GM12878 (cell line): ENCODE measurements at regions of chr12 and their contacts with region 1.

Region 1: DNA sequence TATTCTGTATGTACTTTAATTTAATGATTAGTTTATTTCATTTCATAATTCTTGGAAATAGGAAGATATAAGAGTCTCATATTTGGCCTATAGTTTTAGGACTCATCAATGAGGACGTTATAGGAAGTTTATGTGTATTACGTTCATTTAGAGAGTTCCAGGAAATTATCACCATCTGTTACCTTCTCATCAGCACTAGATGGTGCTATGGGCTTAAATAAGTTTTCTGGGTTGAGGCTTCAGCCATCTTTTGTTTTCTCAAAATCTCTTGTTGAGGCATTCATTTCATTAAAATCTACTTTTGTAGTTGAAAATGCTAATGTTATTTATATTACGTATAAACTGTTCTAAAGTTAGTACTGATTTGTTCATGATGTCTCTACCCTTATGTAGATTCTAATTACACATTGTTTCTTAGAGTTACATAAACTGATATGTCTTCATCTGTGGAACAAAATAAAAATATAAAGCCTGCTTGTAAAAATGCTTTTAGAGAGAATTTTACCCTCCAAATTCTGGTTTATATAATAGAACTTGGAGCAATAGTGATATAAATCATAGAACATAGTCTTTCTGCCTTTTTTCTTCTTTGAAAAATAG is 89.2 kb downstream of the CFAP54 start:
- DNase-seq: peak; percentile 57
- ATAC-seq: peak; percentile 99
- H3K4me3 ChIP-seq: no peak overlapping the region
- H3K27ac ChIP-seq: no peak overlapping the region
- H3K4me1 ChIP-seq: no peaks in the 10 kb centered on the region
- H3K27me3 ChIP-seq: no peaks in the 10 kb centered on the region
- CTCF ChIP-seq: peak; percentile 52 to 79 (median 57); a peak in 5 of 6 replicates
- EP300 ChIP-seq: no peak
- POLR2A ChIP-seq: no peak
- RAD21 ChIP-seq: peak; percentile 93

Region 2: DNA sequence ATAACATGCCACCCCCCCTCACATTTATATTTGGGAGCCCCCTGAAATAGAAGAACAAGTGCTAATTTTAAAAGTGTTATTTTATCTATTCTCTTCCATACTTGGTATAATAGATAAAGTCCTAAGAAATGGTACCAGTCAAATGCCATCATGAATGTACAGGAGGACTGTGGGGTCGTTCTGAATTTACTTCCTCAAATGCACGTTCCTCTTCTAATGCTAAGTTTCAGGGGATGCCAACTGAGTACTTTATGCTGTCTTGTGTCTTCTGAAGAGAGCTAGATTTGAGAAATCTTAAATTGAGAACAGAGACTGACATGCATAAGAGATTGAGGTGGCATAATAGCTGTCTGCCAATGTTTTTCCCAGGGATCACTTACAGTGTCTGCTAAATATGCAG is 30.2 kb before region 1 on chr12:
- CTCF ChIA-PET with region 1: interaction called, 5 read pairs
- POLR2A ChIA-PET with region 1: interaction called, 7 read pairs
- RAD21 ChIA-PET with region 1: interaction called, 5 read pairs
- SMC1A ChIA-PET with region 1: interaction called, 11 read pairs
- in situ Hi-C with region 1: no loop called
- intact Hi-C with region 1: no loop called
- DNase-seq: no peak
- ATAC-seq: peak; percentile 14; the same call in 2 of the 3 replicates
- H3K4me3 ChIP-seq: no peak overlapping the region
- H3K27ac ChIP-seq: no peak overlapping the region
- H3K4me1 ChIP-seq: peaks cover 13% of the 10 kb centered on the region
- H3K27me3 ChIP-seq: no peaks in the 10 kb centered on the region
- CTCF ChIP-seq: no peak
- EP300 ChIP-seq: no peak
- POLR2A ChIP-seq: no peak
- RAD21 ChIP-seq: no peak

Region 3: DNA sequence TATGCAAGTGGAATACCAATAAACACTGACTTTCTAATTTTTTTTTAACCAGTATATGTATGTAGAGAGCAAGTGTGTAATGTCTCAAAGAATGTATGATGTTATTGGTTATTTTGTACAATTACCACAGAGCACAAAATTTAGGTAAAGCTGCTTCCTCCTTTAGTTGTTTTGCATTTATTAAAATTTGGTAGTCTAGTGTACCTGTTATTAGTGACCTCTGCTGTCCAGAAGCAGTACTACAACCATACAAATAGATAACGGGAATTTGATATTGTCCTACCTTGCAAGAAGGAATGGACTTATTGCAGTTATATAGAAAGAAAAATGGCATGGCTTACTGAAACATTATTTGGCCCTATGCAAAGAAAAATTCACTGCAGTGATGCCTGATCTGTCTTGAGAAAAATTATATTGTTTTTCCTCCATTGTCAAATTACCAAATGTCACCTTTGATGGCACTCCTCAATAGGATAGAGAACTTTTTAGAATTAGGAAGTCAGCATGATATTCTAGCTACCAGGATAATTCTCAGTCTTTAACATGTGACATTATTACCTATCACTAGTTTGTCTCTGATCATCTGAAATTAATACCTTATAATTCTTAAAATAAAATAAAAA is 730.1 kb after region 1 on chr12:
- CTCF ChIA-PET with region 1: interaction called, 6 read pairs
- POLR2A ChIA-PET with region 1: no interaction called
- RAD21 ChIA-PET with region 1: no interaction called
- SMC1A ChIA-PET with region 1: interaction called, 6 read pairs
- in situ Hi-C with region 1: loop called (anchors 10 kb)
- intact Hi-C with region 1: loop called (anchors 2 kb)
- DNase-seq: peak; percentile 15
- ATAC-seq: peak; percentile 45; the same call in 2 of the 3 replicates
- H3K4me3 ChIP-seq: no peak overlapping the region
- H3K27ac ChIP-seq: no peak overlapping the region
- H3K4me1 ChIP-seq: no peaks in the 10 kb centered on the region
- H3K27me3 ChIP-seq: no peaks in the 10 kb centered on the region
- CTCF ChIP-seq: peak; percentile 52 to 62 (median 57); a peak in 5 of 6 replicates
- EP300 ChIP-seq: no peak
- POLR2A ChIP-seq: no peak
- RAD21 ChIP-seq: peak; percentile 61

Region 4: DNA sequence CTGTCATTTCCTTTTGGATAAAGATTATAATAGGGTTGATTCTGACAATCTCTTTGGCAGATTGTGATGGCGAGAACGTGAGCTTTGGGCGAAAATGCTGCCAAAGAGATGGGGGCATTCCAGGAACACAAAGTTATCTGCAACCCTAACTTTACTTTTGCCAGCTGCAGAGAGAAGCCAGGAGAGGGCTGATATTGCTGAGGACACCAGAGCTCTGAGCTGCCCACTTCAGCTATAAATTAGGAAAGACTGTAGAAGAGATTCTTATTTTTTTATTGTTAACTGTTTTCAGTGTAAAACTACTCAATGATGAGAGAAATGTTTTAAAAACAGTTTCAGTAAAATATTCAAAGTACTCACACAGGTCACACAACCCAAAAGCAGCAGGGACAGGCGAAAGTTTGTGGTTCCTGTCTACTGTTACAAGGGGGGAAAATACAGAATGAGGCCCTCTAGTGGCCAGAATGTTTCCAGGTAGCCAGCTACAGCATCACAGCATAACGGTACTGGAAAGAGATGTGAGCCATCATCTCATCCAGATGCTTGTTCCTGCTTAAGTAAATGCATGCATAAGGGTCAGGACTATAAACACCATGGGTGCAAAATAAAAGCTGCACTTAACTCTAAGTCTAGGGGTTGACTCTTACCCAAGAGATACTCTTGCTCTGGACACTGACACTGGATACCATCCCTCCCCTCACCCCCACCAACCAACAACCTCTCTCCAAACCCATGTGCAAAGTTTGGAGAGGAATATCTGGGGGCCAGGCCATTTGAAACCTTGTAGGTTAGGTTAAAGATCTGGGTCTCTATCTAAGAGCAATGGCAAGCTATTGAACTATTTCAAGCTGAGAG is 1382.4 kb after region 1 on chr12:
- CTCF ChIA-PET with region 1: interaction called, 12 read pairs
- POLR2A ChIA-PET with region 1: no interaction called
- RAD21 ChIA-PET with region 1: interaction called, 5 read pairs
- SMC1A ChIA-PET with region 1: interaction called, 3 read pairs
- in situ Hi-C with region 1: loop called (anchors 25 kb)
- intact Hi-C with region 1: loop called (anchors 5 kb)
- DNase-seq: peak; percentile 3
- ATAC-seq: peak; percentile 96
- H3K4me3 ChIP-seq: no peak overlapping the region
- H3K27ac ChIP-seq: no peak overlapping the region
- H3K4me1 ChIP-seq: no peaks in the 10 kb centered on the region
- H3K27me3 ChIP-seq: no peaks in the 10 kb centered on the region
- CTCF ChIP-seq: peak; percentile 68 to 81 (median 80)
- EP300 ChIP-seq: no peak
- POLR2A ChIP-seq: no peak
- RAD21 ChIP-seq: peak; percentile 69